ENCODE measurements at regions of chr2 and their contacts with region 1.

Region 1: GRCh38 chr2:195533771-195534642 is 123.0 kb upstream of the SLC39A10 start:
- DNase-seq: peak in 4 of 5 donors; percentile 42 to 77 (median 49)
- H3K4me3 ChIP-seq: peak overlapping the region; percentile 59 to 70
- H3K4me3 Mint-ChIP-seq: peak overlapping the region; percentile 81 to 92 (median 86)
- H3K27ac ChIP-seq: peak overlapping the region; percentile 55
- H3K27ac Mint-ChIP-seq: peak overlapping the region; percentile 93 to 98 (median 96)
- H3K4me1 ChIP-seq: peaks cover 83% of the 10 kb centered on the region
- H3K4me1 Mint-ChIP-seq: peaks cover 69 to 91% (median 78%) of the 10 kb centered on the region in 4 donors
- H3K27me3 ChIP-seq: no peaks in the 10 kb centered on the region
- H3K27me3 Mint-ChIP-seq: no peaks in the 10 kb centered on the region

Region 2: DNA sequence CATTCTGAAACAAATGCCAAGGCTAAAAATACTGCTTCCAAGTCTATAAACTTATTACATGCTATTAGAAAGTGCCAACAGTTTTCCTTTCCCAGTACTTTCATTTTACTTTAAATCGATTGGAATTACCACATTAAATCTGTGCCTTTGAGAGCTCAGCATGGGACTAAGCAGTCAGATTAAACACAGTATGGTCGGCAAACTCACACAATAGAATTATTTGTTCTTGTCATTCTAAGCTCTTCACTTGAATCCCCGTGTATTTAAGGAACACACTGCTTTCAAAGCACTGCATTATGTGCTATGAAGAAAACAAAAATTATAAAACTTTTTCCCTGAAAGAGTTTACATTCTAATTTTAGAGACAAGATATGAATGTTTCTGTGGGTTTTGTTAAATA is 321.4 kb before region 1 on chr2:
- CTCF ChIA-PET with region 1: no interaction called
- POLR2A ChIA-PET with region 1: no interaction called
- intact Hi-C with region 1: no loop called
- DNase-seq: no peak
- H3K4me3 ChIP-seq: no peak overlapping the region
- H3K4me3 Mint-ChIP-seq: no peak overlapping the region
- H3K27ac ChIP-seq: no peak overlapping the region
- H3K27ac Mint-ChIP-seq: no peak overlapping the region
- H3K4me1 ChIP-seq: no peaks in the 10 kb centered on the region
- H3K4me1 Mint-ChIP-seq: no peaks in the 10 kb centered on the region
- H3K27me3 ChIP-seq: no peaks in the 10 kb centered on the region
- H3K27me3 Mint-ChIP-seq: peaks cover 5 to 7% of the 10 kb centered on the region in 2 donors

Region 3: GRCh38 chr2:195543902-195544894 is 10.2 kb after region 1 on chr2:
- CTCF ChIA-PET with region 1: interaction called, 14 read pairs
- POLR2A ChIA-PET with region 1: interaction called, 10 read pairs
- intact Hi-C with region 1: loop called (anchors 1 kb)
- DNase-seq: no peak
- H3K4me3 ChIP-seq: no peak overlapping the region
- H3K4me3 Mint-ChIP-seq: peak overlapping the region; percentile 1 to 78 (median 46)
- H3K27ac ChIP-seq: no peak overlapping the region
- H3K27ac Mint-ChIP-seq: peak overlapping the region; percentile 5 to 88 (median 66)
- H3K4me1 ChIP-seq: peaks cover 47% of the 10 kb centered on the region
- H3K4me1 Mint-ChIP-seq: peaks cover 36 to 57% (median 47%) of the 10 kb centered on the region in 4 donors
- H3K27me3 ChIP-seq: no peaks in the 10 kb centered on the region
- H3K27me3 Mint-ChIP-seq: no peaks in the 10 kb centered on the region

Region 4: GRCh38 chr2:195559431-195559914 is 25.5 kb after region 1 on chr2:
- CTCF ChIA-PET with region 1: interaction called, 117 read pairs
- POLR2A ChIA-PET with region 1: interaction called, 423 read pairs
- intact Hi-C with region 1: loop called (anchors 1 kb)
- DNase-seq: peak; percentile 87 to 90 (median 89)
- H3K4me3 ChIP-seq: no peak overlapping the region
- H3K4me3 Mint-ChIP-seq: peak overlapping the region; percentile 49 to 85 (median 70)
- H3K27ac ChIP-seq: peak overlapping the region; percentile 31
- H3K27ac Mint-ChIP-seq: peak overlapping the region; percentile 82 to 97 (median 92)
- H3K4me1 ChIP-seq: peaks cover 86% of the 10 kb centered on the region
- H3K4me1 Mint-ChIP-seq: peaks cover 49 to 74% (median 58%) of the 10 kb centered on the region in 4 donors
- H3K27me3 ChIP-seq: no peaks in the 10 kb centered on the region
- H3K27me3 Mint-ChIP-seq: no peaks in the 10 kb centered on the region

Region 5: GRCh38 chr2:195672668-195673067 is 138.7 kb after region 1 on chr2:
- CTCF ChIA-PET with region 1: no interaction called
- POLR2A ChIA-PET with region 1: no interaction called
- intact Hi-C with region 1: no loop called
- DNase-seq: no peak
- H3K4me3 ChIP-seq: no peak overlapping the region
- H3K4me3 Mint-ChIP-seq: no peak overlapping the region
- H3K27ac ChIP-seq: no peak overlapping the region
- H3K27ac Mint-ChIP-seq: no peak overlapping the region
- H3K4me1 ChIP-seq: peaks cover 20% of the 10 kb centered on the region
- H3K4me1 Mint-ChIP-seq: peaks cover 23 to 47% (median 32%) of the 10 kb centered on the region in 4 donors
- H3K27me3 ChIP-seq: no peaks in the 10 kb centered on the region
- H3K27me3 Mint-ChIP-seq: no peaks in the 10 kb centered on the region

Region 6: DNA sequence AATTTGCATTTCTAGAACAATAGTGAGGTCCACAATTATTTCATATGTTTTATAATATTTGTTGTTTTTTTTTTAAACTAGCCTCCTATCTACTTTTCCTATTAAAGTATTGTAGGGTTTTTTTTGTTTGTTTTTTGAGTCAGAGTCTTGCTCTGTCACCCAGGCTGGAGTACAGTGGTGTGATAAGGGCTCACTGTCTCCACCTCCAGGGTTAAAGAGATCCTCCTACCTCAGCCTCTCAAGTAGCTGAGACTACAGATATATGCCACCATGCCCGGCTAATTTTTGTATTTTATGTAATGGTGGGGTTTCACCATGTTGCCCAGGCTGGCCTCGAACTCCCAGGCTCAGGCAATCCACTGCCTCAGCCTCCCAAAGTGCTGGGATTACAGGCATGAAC is 245.5 kb after region 1 on chr2:
- CTCF ChIA-PET with region 1: no interaction called
- POLR2A ChIA-PET with region 1: no interaction called
- intact Hi-C with region 1: no loop called
- DNase-seq: no peak
- H3K4me3 ChIP-seq: no peak overlapping the region
- H3K4me3 Mint-ChIP-seq: no peak overlapping the region
- H3K27ac ChIP-seq: no peak overlapping the region
- H3K27ac Mint-ChIP-seq: no peak overlapping the region
- H3K4me1 ChIP-seq: no peaks in the 10 kb centered on the region
- H3K4me1 Mint-ChIP-seq: no peaks in the 10 kb centered on the region
- H3K27me3 ChIP-seq: no peaks in the 10 kb centered on the region
- H3K27me3 Mint-ChIP-seq: peaks cover 1 to 3% of the 10 kb centered on the region in 2 donors

Region 7: GRCh38 chr2:195959341-195959740 is 425.3 kb after region 1 on chr2:
- CTCF ChIA-PET with region 1: no interaction called
- POLR2A ChIA-PET with region 1: no interaction called
- intact Hi-C with region 1: no loop called
- DNase-seq: no peak
- H3K4me3 ChIP-seq: no peak overlapping the region
- H3K4me3 Mint-ChIP-seq: no peak overlapping the region
- H3K27ac ChIP-seq: no peak overlapping the region
- H3K27ac Mint-ChIP-seq: no peak overlapping the region
- H3K4me1 ChIP-seq: no peaks in the 10 kb centered on the region
- H3K4me1 Mint-ChIP-seq: no peaks in the 10 kb centered on the region
- H3K27me3 ChIP-seq: no peaks in the 10 kb centered on the region
- H3K27me3 Mint-ChIP-seq: peaks cover 3 to 5% of the 10 kb centered on the region in 2 donors

Measured in CD4-positive, alpha-beta memory T cell (primary cell).